Activated CD8-positive, alpha-beta memory T cell treated with anti-CD3 and anti-CD28 coated beads, Interleukin-2, amount 10 ng/mL, durations not matched to agents 7 days and 5 days (primary cell): ENCODE measurements at regions of chr5 and their contacts with region 1.

Region 1: GRCh38 chr5:150700594-150701293 is at the start of gene RBM22:
- DNase-seq: peak; percentile 95
- ATAC-seq: peak; percentile 97
- H3K4me3 Mint-ChIP-seq: no peak within 1 kb of the TSS
- H3K27ac Mint-ChIP-seq: no peak within 1 kb of the TSS
- H3K4me1 Mint-ChIP-seq: peaks cover 7% of the 10 kb centered on the region
- H3K27me3 Mint-ChIP-seq: no peaks in the 10 kb centered on the region
- total RNA-seq, gene RBM22: 63.3 to 78.7 TPM

Region 2: DNA sequence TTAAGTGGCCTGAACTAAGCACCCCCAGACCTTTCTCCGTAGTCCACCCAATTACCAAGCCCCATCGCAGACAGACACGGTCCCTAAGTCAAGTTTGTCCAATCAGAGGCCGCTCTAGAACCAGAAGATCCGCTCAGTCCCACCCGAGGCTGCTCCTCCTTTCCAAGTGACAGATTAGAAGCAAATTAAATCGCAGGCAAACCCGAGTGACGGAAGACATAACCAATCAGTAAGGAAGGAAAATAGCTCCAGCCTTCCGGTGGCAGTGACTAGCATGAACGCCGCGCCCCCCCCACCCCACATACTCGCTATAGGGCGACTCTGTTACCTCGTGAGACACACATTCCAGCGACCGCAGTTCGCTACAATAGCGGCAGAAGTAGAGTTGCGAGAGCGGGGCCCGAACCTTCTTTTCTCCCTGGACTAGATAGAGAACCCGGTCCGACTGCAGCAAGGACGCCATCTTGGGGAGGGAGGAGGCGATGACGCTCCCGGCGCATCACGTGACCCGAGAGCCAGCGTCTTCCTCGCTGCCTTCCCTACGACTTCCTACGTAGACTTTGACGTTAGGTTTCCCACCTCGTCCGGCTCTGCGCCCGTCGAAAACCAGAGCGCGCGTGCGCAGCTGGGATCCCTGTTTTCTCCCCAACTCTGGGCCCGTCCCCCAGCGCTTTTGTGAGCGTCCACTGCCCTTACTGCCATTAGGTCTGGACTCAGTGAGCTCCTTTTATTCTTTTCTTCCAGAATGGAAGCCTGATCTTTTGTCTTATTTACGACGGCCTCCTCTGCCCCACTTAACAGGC is 58.0 kb after region 1 on chr5 and contains the start of gene DCTN4:
- CTCF ChIA-PET with region 1: interaction called, 21 read pairs
- DNase-seq: peak; percentile 96
- ATAC-seq: peak; percentile 97
- H3K4me3 Mint-ChIP-seq: no peak within 1 kb of the TSS
- H3K27ac Mint-ChIP-seq: no peak within 1 kb of the TSS
- H3K4me1 Mint-ChIP-seq: peaks cover 23% of the 10 kb centered on the region
- H3K27me3 Mint-ChIP-seq: no peaks in the 10 kb centered on the region
- total RNA-seq, gene DCTN4: 41.9 to 46.1 TPM